ENCODE measurements at regions of chr3 and their contacts with region 1.

Region 1: DNA sequence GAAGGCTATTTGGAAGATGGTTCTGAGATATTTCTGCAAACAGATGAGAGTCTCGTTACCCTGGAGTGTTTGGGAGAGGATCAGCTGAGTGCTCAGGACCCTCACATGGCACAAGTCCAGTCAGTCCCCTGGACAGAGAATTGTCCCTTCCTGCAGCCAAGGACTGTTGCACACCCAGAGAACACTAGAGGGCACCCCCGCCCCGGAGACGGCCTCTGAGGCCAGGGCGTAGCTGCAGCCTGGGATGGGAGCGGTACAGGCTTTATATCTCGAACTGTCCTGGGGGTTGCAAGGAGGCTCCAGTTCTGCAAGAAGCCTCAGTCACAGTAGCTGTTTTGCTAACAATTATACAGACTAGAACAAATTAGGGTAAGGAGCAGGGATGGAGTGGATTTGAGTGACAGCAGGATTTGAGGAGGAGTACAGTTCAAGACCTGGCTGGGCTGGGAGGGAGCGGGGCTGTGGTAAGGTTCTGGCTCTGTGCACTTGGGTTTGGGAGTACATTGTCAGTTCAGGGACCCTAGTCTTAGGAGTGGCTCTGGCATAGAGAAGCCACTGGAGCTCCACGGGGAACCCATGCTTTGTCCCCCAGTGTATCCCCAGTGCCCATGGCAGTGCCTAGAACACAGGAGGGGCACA is 67.6 kb upstream of the HACD2 start:
- DNase-seq: peak; percentile 55
- H3K4me3 Mint-ChIP-seq: no peak overlapping the region
- H3K27ac Mint-ChIP-seq: no peak overlapping the region
- H3K4me1 Mint-ChIP-seq: no peaks in the 10 kb centered on the region
- H3K27me3 Mint-ChIP-seq: peaks cover under 1% of the 10 kb centered on the region

Region 2: DNA sequence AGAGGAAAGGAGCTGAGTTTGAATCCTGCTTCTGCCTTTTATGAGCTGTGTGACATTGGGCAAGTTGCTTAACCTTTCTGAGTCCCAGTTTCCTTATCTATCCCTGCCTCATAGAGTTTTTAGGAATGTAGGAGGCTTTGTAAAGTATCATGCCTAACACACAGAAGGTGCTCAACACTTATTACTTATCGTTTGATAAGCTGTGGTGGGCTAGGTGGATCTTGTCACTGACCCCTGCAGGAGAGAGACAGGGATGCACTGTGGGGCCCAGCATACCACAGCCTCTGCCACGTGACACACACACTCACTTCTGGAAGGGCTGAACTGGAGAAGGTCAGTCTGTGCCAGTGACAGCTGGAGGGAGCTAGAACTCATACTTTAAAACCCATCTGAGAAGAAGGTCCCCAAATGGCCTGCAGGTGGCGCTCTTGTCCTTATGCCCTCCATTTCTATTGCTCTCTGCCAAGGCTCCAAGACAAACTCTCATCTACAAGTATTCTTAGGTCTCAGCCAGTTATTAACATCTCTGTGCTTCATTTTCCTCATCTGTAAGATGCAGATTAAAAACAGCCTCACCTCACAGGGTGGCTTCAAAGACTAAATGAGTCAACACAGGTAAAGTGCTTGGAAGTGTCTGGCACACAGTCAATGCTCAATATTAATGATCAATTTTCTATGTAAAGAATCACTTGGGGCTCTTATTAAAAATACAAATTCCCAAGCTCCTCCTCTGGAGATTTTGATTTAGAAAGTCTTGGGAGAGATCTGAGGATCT is 10.1 kb before region 1 on chr3:
- CTCF ChIA-PET with region 1: interaction called, 38 read pairs
- POLR2A ChIA-PET with region 1: no interaction called
- intact Hi-C with region 1: no loop called
- DNase-seq: peak; percentile 77
- H3K4me3 Mint-ChIP-seq: no peak overlapping the region
- H3K27ac Mint-ChIP-seq: no peak overlapping the region
- H3K4me1 Mint-ChIP-seq: no peaks in the 10 kb centered on the region
- H3K27me3 Mint-ChIP-seq: no peaks in the 10 kb centered on the region

Region 3: GRCh38 chr3:123718108-123718507 is 65.6 kb after region 1 on chr3:
- CTCF ChIA-PET with region 1: interaction called, 21 read pairs
- POLR2A ChIA-PET with region 1: no interaction called
- intact Hi-C with region 1: no loop called
- DNase-seq: no peak
- H3K4me3 Mint-ChIP-seq: no peak overlapping the region
- H3K27ac Mint-ChIP-seq: no peak overlapping the region
- H3K4me1 Mint-ChIP-seq: no peaks in the 10 kb centered on the region
- H3K27me3 Mint-ChIP-seq: no peaks in the 10 kb centered on the region

Measured in activated CD4-positive, alpha-beta memory T cell treated with anti-CD3 and anti-CD28 coated beads for 36 hours (primary cell).